Esophagus squamous epithelium (tissue), 5 donors: ENCODE measurements at regions of chr11 and their contacts with region 1.

Region 1: GRCh38 chr11:43419460-43419859 is 60.7 kb downstream of the TTC17 start:
- DNase-seq: no peak
- H3K4me3 ChIP-seq: no peak overlapping the region
- H3K27ac ChIP-seq: no peak overlapping the region
- H3K4me1 ChIP-seq: no peaks in the 10 kb centered on the region
- H3K27me3 ChIP-seq: no peaks in the 10 kb centered on the region
- CTCF ChIP-seq: peak in 5 of 6 experiments; percentile 23 to 75 (median 55)
- POLR2A ChIP-seq: no peak

Region 2: GRCh38 chr11:43327987-43328386 is 91.5 kb before region 1 on chr11:
- intact Hi-C with region 1: loop called (anchors 10 kb)
- DNase-seq: no peak
- H3K4me3 ChIP-seq: no peak overlapping the region
- H3K27ac ChIP-seq: no peak overlapping the region
- H3K4me1 ChIP-seq: no peaks in the 10 kb centered on the region
- H3K27me3 ChIP-seq: no peaks in the 10 kb centered on the region
- CTCF ChIP-seq: no peak
- POLR2A ChIP-seq: no peak

Region 3: DNA sequence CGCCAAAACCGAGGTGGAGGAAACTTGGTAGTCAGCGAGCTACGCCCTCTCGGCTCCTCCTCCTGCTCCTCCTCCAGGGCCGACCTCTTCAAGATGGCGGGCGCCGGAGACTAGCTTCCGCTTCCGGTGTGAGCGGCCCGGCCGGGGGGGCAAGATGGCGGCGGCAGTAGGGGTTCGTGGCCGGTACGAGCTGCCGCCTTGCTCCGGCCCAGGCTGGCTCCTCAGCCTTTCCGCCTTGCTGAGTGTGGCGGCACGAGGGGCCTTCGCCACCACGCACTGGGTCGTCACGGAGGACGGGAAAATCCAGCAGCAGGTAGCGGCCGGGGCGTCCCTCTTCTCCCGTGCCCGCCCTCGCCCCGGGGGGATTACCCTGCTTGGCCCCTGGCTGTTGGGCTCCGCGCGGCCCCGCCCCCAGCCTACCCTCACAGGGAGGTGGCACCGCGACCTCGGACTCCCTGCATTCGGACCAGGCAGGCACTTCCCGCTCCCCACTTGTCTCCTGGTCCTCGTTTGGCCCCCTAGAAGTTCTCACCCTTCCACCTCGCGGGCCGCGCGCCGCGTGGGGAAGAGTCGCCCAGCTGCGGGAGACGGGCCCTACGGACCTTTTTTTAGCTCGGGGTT is 60.5 kb before region 1 on chr11 and contains the start of gene TTC17:
- intact Hi-C with region 1: no loop called
- DNase-seq: peak; percentile 73
- H3K4me3 ChIP-seq: peak within 1 kb of the TSS; percentile 79 to 100 (median 96)
- H3K27ac ChIP-seq: peak within 1 kb of the TSS; percentile 89 to 97 (median 94)
- H3K4me1 ChIP-seq: peaks cover 9 to 36% (median 16%) of the 10 kb centered on the region in 3 donors
- H3K27me3 ChIP-seq: no peaks in the 10 kb centered on the region
- CTCF ChIP-seq: peak in 1 of 6 experiments; percentile 3
- POLR2A ChIP-seq: peak in 3 of 4 donors; percentile 52 to 90 (median 79)
- total RNA-seq, gene TTC17: 37.5 to 106 (median 55.9) TPM